CD4-positive, alpha-beta memory T cell (primary cell): ENCODE measurements at regions of chr6 and their contacts with region 1.

Region 1: DNA sequence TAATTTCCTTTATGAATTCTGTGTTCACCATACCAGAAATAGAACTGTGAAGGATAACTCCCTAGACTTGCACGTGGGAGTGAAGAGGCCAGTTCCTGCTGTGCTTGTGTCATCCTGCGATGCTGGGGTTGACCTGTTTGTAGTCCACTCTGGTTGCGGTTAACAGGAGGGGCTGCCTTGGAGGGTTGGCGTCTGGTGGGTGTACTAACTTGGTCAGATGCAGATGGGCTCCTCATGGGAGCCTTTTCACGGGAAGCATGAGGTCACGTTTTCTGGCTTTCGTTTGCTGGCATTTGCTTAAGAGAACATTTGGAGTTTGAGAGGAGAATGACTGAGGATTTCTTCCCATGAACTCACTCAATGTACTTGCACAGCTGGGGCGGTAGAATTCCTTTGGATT is 41.2 kb downstream of the IGF2R start:
- DNase-seq: no peak
- H3K4me3 ChIP-seq: no peak overlapping the region
- H3K4me3 Mint-ChIP-seq: no peak overlapping the region
- H3K27ac ChIP-seq: no peak overlapping the region
- H3K27ac Mint-ChIP-seq: no peak overlapping the region
- H3K4me1 ChIP-seq: peaks cover 32% of the 10 kb centered on the region
- H3K4me1 Mint-ChIP-seq: peaks cover 39 to 55% (median 44%) of the 10 kb centered on the region in 4 donors
- H3K27me3 ChIP-seq: no peaks in the 10 kb centered on the region
- H3K27me3 Mint-ChIP-seq: no peaks in the 10 kb centered on the region

Region 2: DNA sequence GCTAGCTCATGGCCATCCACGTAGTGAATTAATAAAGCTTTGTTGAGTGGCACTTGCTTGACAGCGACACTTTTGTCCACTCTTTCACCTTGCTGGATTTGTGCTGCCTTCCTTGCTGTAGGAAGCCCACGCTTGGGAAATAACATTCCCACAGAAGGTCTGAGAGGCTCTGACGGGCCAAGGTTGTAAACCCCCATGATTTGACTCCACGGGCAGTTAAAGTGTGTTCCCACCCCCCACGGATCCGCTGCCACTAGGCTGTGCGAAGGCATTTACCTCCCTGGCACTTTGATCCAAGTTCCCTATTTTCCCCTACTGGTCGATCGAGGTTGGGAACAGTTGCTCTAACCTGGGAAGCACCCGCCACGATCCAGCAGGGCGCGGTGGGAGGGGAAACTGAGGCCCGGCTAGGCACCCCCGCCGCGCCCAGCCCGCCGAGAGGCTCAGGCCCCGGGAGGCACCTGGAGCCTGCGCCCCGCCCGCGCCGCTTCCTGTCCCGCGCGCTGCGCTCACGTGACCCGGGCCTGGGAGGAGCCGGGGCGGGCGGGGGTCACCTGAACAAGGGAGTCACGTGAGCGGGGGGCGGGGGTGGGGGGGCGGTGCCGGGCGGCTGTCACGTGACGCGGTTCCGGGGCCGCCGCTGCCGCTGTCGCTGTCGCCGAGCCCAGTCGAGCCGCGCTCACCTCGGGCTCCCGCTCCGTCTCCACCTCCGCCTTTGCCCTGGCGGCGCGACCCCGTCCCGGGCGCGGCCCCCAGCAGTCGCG is 41.4 kb before region 1 on chr6 and contains the start of gene IGF2R:
- CTCF ChIA-PET with region 1: no interaction called
- POLR2A ChIA-PET with region 1: interaction called, 68 read pairs
- intact Hi-C with region 1: loop called (anchors 1 kb)
- DNase-seq: peak; percentile 91 to 94 (median 92)
- H3K4me3 ChIP-seq: peak within 1 kb of the TSS; percentile 61 to 62
- H3K4me3 Mint-ChIP-seq: peak within 1 kb of the TSS; percentile 88 to 96 (median 94)
- H3K27ac ChIP-seq: peak within 1 kb of the TSS; percentile 75
- H3K27ac Mint-ChIP-seq: peak within 1 kb of the TSS; percentile 92 to 97 (median 94)
- H3K4me1 ChIP-seq: peaks cover 44% of the 10 kb centered on the region
- H3K4me1 Mint-ChIP-seq: peaks cover 29 to 45% (median 38%) of the 10 kb centered on the region in 4 donors
- H3K27me3 ChIP-seq: no peaks in the 10 kb centered on the region
- H3K27me3 Mint-ChIP-seq: no peaks in the 10 kb centered on the region
- total RNA-seq, gene IGF2R: 77.5 to 79.2 TPM

Region 3: DNA sequence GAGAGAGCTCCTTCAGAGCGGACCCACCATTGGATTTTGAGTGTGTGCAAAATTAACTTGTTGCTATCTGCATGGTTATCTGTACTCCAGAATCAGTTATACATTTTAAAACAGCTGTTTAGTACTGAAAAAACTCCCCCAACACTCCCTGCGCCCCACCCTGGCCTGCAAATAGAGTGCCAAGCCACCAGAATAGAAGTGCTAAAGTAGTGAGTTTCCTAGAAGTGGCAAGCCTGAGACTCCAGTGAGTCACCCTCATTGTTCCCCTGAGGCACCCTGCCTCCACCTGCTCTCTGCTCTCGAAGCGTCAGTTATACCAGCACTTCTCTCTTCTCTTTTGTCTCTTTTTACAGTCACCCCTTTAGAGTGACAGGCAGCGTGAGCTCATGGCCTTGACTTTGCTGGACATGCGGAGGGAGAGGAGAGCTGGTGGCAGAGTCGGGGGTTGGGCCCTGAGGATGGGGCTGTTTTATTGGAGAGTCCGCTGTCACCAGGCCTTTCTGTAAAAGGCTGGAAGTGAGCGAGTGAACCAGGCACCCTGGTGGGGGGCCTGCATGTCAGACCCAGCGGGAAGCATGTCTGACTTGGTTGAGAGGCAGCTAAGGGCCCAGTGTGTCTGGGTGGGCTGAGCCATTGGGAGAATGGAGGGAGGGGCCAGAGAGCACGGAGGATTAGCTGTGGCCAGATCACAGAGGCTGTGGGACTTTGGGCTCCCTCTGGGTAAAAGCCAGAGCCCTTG is 30.8 kb before region 1 on chr6:
- CTCF ChIA-PET with region 1: interaction called, 4 read pairs
- POLR2A ChIA-PET with region 1: interaction called, 68 read pairs
- intact Hi-C with region 1: loop called (anchors 2 kb)
- DNase-seq: peak in 2 of 5 donors; percentile 18 to 72
- H3K4me3 ChIP-seq: no peak overlapping the region
- H3K4me3 Mint-ChIP-seq: peak overlapping the region in 7 of 8 donors; percentile 32 to 87 (median 66)
- H3K27ac ChIP-seq: peak overlapping the region; percentile 60
- H3K27ac Mint-ChIP-seq: peak overlapping the region; percentile 84 to 96 (median 88)
- H3K4me1 ChIP-seq: peaks cover 93% of the 10 kb centered on the region
- H3K4me1 Mint-ChIP-seq: peaks cover 76 to 96% (median 85%) of the 10 kb centered on the region in 4 donors
- H3K27me3 ChIP-seq: no peaks in the 10 kb centered on the region
- H3K27me3 Mint-ChIP-seq: no peaks in the 10 kb centered on the region

Region 4: DNA sequence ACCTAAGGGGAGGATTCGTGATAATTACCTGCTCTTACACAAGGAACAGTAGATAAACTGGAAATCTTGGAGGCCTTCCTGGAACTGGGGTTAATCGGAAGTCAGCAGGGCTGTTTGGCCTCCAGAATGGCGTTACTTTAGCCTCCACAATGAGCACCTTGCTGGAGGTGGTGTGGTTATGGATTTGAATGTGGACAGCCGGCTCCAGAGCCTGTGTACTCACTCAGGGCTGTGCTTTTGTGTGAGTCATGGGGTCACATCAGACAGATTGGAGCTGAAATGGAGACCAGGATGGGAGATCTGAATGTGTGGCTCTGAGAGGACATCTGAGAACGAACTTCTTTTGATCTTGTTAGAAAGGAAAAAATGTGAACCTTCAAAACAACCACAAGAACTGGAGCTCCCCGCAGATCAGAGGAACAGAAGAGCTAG is 10.8 kb before region 1 on chr6:
- CTCF ChIA-PET with region 1: no interaction called
- POLR2A ChIA-PET with region 1: interaction called, 5 read pairs
- intact Hi-C with region 1: loop called (anchors 2 kb)
- DNase-seq: no peak
- H3K4me3 ChIP-seq: no peak overlapping the region
- H3K4me3 Mint-ChIP-seq: peak overlapping the region in 6 of 8 donors; percentile 44 to 68 (median 55)
- H3K27ac ChIP-seq: no peak overlapping the region
- H3K27ac Mint-ChIP-seq: peak overlapping the region in 3 of 7 donors; percentile 45 to 84 (median 75)
- H3K4me1 ChIP-seq: peaks cover 24% of the 10 kb centered on the region
- H3K4me1 Mint-ChIP-seq: peaks cover 46 to 69% (median 61%) of the 10 kb centered on the region in 4 donors
- H3K27me3 ChIP-seq: no peaks in the 10 kb centered on the region
- H3K27me3 Mint-ChIP-seq: no peaks in the 10 kb centered on the region